MCF 10A (cell line): ENCODE measurements at regions of chr16 and their contacts with region 1.

Region 1: GRCh38 chr16:10964039-10964890 is 19.9 kb downstream of the CLEC16A start:
- DNase-seq: peak; percentile 79
- H3K4me3 Mint-ChIP-seq: no peak overlapping the region
- H3K27ac Mint-ChIP-seq: no peak overlapping the region
- H3K4me1 Mint-ChIP-seq: peaks cover 18% of the 10 kb centered on the region
- H3K27me3 Mint-ChIP-seq: no peaks in the 10 kb centered on the region
- CTCF ChIP-seq: peak; percentile 93

Region 2: DNA sequence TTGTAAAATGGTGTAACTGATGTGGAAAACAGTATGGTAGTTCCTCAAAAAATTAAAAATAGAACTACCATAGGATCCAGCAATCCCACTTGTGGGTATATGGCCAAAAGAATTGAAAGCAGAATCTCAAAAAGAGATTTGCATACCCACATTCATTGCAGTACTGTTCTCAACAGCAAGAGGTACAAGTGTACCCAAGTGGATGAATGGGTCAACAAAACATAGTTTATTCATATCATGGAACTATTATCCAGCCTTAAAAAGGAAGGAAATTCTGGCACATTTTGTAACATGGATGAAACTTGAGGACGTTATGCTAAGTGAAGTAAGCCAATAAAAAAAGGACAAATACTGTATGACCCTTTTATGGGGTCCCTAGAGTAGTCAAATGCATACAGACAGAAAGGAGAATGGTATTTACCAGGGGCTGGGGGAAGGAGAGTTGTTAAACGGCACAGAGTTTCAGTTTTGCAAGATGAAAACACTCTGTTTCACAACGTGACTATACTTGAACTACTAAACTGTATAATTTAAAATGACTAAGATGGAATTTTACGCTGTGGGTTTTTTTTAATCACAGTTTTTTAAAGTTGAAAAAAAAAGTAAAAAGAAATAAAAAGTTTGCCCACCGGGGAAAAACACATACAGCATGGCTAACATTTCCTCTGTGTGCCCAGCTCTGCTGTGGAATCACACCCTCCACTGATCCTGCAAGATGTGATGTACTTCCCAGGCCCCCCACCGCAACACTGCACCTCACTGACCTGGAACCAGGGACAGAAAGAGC is 151.8 kb before region 1 on chr16:
- CTCF ChIA-PET with region 1: no interaction called
- POLR2A ChIA-PET with region 1: no interaction called
- intact Hi-C with region 1: no loop called
- DNase-seq: no peak
- H3K4me3 Mint-ChIP-seq: no peak overlapping the region
- H3K27ac Mint-ChIP-seq: no peak overlapping the region
- H3K4me1 Mint-ChIP-seq: no peaks in the 10 kb centered on the region
- H3K27me3 Mint-ChIP-seq: no peaks in the 10 kb centered on the region
- CTCF ChIP-seq: no peak

Region 3: DNA sequence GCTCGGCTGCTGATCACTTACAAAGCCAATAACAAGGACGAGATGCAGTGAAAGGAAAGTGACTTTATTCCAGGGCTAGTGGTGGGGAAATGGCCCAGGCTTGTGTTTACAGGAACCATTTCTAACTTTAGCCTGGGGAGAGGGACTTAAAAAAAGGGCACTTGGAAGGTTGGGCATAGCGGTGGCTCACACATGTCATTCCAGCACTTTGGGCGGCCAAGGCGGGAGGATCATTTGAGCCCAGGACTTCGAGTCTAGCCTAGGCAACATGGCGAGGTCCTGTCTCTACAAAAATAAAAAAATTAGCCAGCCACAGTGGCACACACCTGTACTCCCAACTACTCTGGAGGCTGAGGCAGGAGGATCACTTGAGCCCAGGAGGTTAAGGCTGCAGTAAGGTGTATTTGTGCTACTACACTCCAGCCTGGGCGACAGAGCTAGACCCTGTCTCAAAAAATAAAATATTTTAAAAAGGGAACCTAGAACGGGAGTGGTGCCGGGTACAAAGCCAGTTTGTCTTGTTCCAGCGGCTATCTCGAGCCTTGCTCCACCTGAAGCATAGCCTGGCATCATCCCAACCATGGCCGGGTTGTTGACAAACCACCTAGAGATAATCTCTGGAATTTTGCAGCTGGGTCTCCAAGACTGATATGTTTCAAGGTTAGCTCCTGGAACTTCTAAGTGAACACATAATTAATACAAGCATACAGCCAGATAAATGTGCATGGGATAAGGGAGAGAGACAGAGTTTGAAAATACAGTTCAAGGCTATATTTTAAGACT is 140.0 kb before region 1 on chr16:
- CTCF ChIA-PET with region 1: no interaction called
- POLR2A ChIA-PET with region 1: no interaction called
- intact Hi-C with region 1: no loop called
- DNase-seq: no peak
- H3K4me3 Mint-ChIP-seq: no peak overlapping the region
- H3K27ac Mint-ChIP-seq: peak overlapping the region; percentile 49
- H3K4me1 Mint-ChIP-seq: peaks cover 14% of the 10 kb centered on the region
- H3K27me3 Mint-ChIP-seq: no peaks in the 10 kb centered on the region
- CTCF ChIP-seq: no peak

Region 4: GRCh38 chr16:10949370-10949970 is 14.8 kb before region 1 on chr16:
- CTCF ChIA-PET with region 1: interaction called, 115 read pairs
- POLR2A ChIA-PET with region 1: interaction called, 5 read pairs
- intact Hi-C with region 1: no loop called
- DNase-seq: peak; percentile 65
- H3K4me3 Mint-ChIP-seq: no peak overlapping the region
- H3K27ac Mint-ChIP-seq: peak overlapping the region; percentile 75
- H3K4me1 Mint-ChIP-seq: peaks cover 45% of the 10 kb centered on the region
- H3K27me3 Mint-ChIP-seq: no peaks in the 10 kb centered on the region
- CTCF ChIP-seq: no peak

Region 5: GRCh38 chr16:11056090-11056992 is 92.1 kb after region 1 on chr16:
- CTCF ChIA-PET with region 1: interaction called, 12 read pairs
- POLR2A ChIA-PET with region 1: no interaction called
- intact Hi-C with region 1: no loop called
- DNase-seq: no peak
- H3K4me3 Mint-ChIP-seq: no peak overlapping the region
- H3K27ac Mint-ChIP-seq: peak overlapping the region; percentile 82
- H3K4me1 Mint-ChIP-seq: peaks cover 11% of the 10 kb centered on the region
- H3K27me3 Mint-ChIP-seq: no peaks in the 10 kb centered on the region
- CTCF ChIP-seq: no peak

Region 6: DNA sequence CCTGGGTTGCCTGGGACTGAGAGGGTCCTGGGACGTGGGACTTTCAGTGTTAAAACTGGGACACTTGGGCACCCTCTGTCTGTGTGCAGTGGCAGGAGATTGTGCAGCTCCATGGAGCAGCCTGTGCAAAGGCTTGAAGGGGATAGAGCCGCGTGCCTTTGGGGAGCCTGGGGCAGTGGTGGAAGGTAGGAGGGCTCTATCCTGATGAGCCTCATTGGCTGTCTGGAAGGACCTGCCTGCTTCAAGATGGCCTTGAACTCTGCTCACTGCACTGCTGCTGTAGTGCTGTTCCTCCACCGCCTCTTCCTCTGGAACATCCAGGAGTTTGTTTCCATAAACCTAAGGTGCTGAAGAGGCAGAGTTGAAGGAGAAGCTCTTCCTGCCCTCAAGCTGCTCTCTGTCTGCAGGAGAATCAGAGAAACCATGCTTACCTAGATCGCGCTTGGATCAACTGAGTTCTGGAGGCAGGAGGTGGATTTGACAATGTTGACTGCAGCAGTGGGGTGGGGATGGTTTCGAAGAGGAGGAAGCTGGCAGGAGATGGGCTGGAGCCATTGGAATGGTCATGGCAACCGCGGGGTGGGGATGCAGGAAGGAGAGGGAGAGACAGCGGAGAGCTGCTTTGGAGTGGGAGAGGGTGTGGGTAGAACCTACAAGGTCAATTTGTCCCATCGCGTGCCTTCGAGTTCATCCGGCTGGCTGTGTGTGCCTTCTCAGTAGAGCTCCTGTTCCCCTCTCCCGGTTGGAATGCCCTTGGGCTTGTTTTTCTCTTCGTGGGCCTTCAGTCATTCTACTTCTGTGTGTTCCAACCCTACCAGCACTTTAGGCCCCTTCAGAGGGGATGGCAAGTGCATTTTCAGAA is 384.7 kb after region 1 on chr16:
- CTCF ChIA-PET with region 1: interaction called, 10 read pairs
- POLR2A ChIA-PET with region 1: no interaction called
- intact Hi-C with region 1: no loop called
- DNase-seq: no peak
- H3K4me3 Mint-ChIP-seq: no peak overlapping the region
- H3K27ac Mint-ChIP-seq: peak overlapping the region; percentile 65
- H3K4me1 Mint-ChIP-seq: peaks cover 20% of the 10 kb centered on the region
- H3K27me3 Mint-ChIP-seq: no peaks in the 10 kb centered on the region
- CTCF ChIP-seq: no peak

Region 7: DNA sequence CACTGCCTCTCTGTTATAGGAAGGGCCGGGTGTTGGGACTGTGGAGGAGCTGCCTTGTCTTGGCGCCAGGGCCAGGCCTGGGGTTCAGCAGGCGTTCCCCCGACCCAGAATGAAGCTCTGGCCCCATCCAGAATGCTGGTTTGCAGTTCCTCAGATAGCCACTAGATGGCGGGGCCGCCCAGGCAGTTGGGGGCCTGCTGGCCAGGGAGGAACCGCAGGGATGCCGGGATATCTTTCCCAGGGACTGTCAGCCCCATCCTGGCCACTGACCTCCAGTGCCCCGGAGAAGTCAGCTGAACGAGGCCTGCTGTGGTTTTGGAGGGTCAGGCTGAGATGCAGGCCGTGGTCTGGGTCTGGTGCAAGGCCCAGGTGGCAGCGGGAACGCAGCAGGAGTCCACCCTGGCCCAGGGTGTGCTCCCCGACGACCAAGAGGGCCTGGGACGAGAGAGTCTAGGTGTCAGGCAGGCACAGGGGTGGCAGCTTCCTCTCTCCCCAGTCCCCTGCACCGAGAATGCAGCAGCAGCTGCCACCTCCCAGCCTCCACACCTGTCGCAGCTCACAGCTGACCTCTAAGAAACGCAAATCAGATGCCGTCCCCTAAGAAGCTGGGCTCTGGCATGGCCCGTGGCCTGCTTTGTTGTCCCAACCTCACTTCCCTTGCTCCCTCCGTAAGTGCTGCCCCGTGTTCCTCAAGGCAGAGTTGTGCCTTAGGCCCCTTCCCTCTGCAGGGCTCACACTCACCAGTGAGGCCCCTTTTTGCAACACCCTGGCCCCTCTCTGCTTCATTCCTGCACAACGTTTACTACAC is 432.2 kb after region 1 on chr16:
- CTCF ChIA-PET with region 1: interaction called, 14 read pairs
- POLR2A ChIA-PET with region 1: no interaction called
- intact Hi-C with region 1: loop called (anchors 5 kb)
- DNase-seq: peak; percentile 63
- H3K4me3 Mint-ChIP-seq: no peak overlapping the region
- H3K27ac Mint-ChIP-seq: no peak overlapping the region
- H3K4me1 Mint-ChIP-seq: no peaks in the 10 kb centered on the region
- H3K27me3 Mint-ChIP-seq: no peaks in the 10 kb centered on the region
- CTCF ChIP-seq: peak; percentile 99